HEK293T (cell line): ENCODE measurements at regions of chr13 and their contacts with region 1.

Region 1: GRCh38 chr13:21176220-21176982 is at the starts of genes MRPL57 and SKA3:
- DNase-seq: peak; percentile 89

Region 2: DNA sequence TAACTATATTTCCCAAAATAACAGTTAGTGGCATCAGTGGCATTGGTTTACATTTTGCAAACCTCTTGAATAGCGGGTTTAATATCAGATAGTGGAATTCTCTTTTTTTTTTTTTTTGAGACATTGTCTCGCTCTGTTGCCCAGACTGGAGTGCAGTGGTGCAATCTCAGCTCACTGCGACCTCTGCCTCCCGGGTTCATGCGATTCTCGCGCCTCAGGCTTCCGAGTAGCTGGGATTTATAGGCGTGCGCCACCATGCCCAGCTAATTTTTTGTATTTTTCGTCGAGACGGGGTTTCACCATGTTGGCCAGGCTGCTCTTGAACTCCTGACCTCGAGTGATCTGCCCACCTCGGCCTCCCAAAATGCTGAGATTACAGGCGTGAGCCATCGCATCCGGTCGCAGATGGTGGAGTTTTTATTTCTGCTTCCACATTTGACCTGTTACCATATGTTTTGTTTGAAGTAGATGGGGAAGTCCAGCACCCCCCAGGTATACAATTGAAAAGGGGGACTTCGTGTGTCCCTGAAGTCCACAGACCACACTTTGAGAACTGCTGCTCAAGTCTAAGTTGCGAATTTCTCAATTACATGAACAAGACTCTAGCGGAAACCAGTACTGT is 233.4 kb before region 1 on chr13:
- CTCF ChIA-PET with region 1: no interaction called
- POLR2A ChIA-PET with region 1: interaction called, 20 read pairs
- DNase-seq: no peak

Region 3: DNA sequence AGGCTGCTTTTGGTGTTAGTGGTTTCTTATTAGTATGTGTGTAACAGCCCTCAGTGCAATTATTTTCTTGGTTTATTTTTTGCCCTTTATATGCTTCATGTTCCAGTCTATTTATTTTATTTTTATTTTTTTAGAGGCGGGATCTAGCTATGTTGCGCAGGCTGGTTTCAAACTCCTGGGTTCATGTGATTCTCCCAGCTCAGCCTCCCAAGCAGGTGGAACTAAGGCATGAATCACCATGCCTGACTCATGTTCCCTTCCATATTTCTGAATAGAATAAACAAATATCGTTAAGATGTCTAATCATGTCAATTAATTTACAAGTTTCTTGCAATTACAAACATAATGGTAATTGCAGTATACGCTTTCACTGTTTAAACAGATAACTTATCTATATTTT is 11.8 kb before region 1 on chr13:
- CTCF ChIA-PET with region 1: no interaction called
- POLR2A ChIA-PET with region 1: interaction called, 12 read pairs
- DNase-seq: no peak

Region 4: DNA sequence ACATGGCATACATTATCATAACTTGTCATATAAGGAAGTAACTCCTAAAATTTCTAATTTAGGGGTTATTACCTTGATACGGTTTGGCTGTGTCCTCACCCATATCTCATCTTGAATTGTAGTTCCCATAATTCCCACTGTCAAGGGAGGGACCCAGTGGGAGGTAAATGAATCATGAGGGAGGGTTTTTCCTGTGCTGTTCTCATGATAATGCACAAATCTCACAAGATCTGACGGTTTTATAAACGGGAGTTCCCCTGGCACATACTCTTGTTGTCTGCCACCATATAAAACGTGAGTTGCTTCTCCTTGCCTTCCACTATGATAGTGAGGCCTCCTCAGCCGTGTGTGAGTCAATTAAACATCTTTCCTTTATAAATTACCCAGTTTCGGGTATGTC is 206.7 kb after region 1 on chr13:
- CTCF ChIA-PET with region 1: no interaction called
- POLR2A ChIA-PET with region 1: no interaction called
- DNase-seq: no peak